Activated CD8-positive, alpha-beta memory T cell treated with anti-CD3 and anti-CD28 coated beads, Interleukin-2, amount 10 ng/mL, durations not matched to agents 7 days and 5 days (primary cell): ENCODE measurements at regions of chr20 and their contacts with region 1.

Region 1: GRCh38 chr20:51541189-51542032 is 1.1 kb downstream of the NFATC2 start:
- DNase-seq: peak; percentile 93
- ATAC-seq: peak; percentile 79
- H3K4me3 Mint-ChIP-seq: peak overlapping the region; percentile 97
- H3K27ac Mint-ChIP-seq: peak overlapping the region; percentile 99
- H3K4me1 Mint-ChIP-seq: peaks cover 52% of the 10 kb centered on the region
- H3K27me3 Mint-ChIP-seq: peaks cover 29% of the 10 kb centered on the region

Region 2: GRCh38 chr20:51500311-51500710 is 41.1 kb before region 1 on chr20:
- CTCF ChIA-PET with region 1: interaction called, 18 read pairs
- DNase-seq: peak; percentile 82
- ATAC-seq: peak; percentile 92
- H3K4me3 Mint-ChIP-seq: no peak overlapping the region
- H3K27ac Mint-ChIP-seq: peak overlapping the region; percentile 68
- H3K4me1 Mint-ChIP-seq: peaks cover 85% of the 10 kb centered on the region
- H3K27me3 Mint-ChIP-seq: no peaks in the 10 kb centered on the region

Region 3: DNA sequence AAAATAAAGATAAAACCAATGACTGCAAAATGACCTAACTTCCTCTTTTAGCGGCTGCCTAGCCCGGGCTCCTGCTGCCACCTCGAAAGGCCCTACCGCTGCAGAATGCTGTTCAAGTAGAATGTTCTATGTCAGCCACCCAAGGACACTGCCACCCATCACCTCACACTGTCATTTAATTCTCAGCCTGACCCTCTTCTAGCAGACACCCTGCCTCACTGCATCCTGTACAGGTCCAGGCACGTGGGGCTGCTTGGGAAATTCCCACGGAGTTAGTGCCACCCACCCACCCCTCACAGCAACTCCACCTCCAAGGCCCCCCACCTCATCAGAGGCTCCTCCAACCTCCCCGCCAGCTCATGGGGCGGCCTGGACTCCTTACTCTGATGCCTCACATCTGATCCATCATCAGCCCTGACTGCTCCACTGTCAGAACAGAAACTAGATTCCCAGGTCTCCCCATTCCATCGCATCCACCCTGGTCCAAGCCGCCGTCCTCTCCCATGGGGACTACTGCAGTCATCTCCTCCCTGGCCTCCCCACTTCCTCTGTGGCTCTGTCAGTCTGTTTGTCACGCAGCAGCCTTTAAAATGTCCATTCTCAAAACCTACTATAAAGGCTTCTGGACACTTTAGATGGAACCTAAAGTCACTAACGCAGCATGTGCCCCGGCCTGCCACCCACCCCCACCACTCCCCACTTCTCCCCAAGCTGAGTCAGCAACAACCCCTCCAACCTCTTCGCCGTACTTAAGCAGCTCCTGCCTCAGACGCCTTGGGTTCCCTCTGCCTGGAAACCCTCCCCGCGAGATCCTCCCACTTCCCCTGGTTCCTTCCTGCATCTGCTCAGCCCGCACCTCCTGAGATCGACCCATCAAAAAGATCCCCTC is 15.9 kb before region 1 on chr20:
- CTCF ChIA-PET with region 1: interaction called, 24 read pairs
- DNase-seq: peak; percentile 68
- ATAC-seq: peak; percentile 35
- H3K4me3 Mint-ChIP-seq: peak overlapping the region; percentile 77
- H3K27ac Mint-ChIP-seq: peak overlapping the region; percentile 95
- H3K4me1 Mint-ChIP-seq: peaks cover 73% of the 10 kb centered on the region
- H3K27me3 Mint-ChIP-seq: no peaks in the 10 kb centered on the region

Region 4: DNA sequence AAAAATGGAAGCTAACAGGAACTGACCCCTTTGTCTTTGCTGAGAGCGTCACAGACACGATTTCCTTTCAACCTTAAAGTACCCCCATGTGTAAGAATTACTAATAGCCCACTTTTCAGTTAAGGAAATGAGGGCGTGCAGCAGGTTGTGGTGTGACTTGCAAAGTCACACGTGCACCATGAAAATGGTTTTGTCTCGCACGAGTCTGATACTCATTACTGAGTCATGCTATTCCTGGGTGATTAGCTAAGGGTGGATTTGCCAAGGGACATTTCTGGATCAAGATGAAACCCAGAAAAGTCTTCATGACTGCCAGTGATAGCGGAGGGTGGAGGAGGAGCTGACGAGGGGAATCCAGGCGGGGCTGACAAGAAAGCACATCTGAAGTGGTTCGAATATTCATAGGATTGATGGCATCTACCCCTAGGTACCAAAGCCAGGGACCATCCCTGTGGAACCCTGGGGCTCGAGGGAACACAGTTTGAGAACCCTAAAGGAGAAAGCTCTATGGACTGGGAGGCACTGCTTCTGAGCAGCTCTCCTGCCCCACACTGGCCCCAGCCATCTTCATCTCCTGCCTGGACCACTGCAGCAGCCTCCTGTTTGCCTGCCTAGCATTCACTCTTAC is 13.2 kb after region 1 on chr20:
- CTCF ChIA-PET with region 1: interaction called, 10 read pairs
- DNase-seq: peak; percentile 63
- ATAC-seq: peak; percentile 67
- H3K4me3 Mint-ChIP-seq: no peak overlapping the region
- H3K27ac Mint-ChIP-seq: peak overlapping the region; percentile 57
- H3K4me1 Mint-ChIP-seq: peaks cover 14% of the 10 kb centered on the region
- H3K27me3 Mint-ChIP-seq: peaks cover 12% of the 10 kb centered on the region